ENCODE measurements at regions of chr7 and their contacts with region 1.

Region 1: DNA sequence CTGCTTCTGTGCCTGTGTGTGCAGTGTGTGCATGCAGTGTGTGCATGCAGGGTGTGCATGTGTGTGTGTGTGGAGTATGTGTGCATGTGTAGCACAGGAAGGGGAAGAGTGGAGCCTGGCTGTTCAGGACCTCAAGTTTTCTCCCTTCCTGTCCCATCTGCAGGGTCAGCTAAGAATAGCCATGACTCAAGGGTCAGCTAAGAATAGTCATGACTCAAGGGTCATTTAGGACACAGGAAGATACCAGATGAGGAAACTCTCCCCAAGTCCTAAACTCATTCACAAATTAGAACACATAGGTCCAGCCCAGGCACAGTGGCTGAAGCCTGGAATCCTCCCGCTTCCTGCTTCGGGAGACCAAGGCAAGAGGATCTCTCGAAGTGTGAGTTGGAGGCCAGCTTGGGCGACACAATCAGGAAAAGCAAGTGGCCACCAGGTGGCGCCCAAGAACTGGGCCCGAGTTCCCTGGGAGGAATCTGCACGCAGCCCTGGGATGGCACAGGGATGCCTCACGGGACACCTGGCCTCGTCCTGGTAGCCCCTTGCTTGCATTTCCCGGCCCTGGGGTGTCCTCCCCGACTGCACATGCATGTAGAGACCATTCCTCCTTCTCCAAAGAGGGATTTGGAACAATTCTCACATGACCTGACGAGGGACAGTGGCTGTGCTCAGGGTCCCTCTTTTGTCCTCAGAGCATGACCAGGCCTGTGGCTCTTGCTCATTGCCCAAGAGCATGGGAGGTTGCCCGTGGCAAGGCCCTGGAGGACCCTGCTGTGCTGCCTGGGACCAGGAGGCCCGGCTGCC is 21.4 kb upstream of the VOPP1 start:
- DNase-seq: peak; percentile 40 to 74 (median 53)
- H3K4me3 ChIP-seq: no peak overlapping the region
- H3K4me3 Mint-ChIP-seq: no peak overlapping the region
- H3K27ac ChIP-seq: no peak overlapping the region
- H3K27ac Mint-ChIP-seq: no peak overlapping the region
- H3K4me1 ChIP-seq: peaks cover 11% of the 10 kb centered on the region
- H3K4me1 Mint-ChIP-seq: peaks cover 2 to 5% (median 4%) of the 10 kb centered on the region in 3 donors
- H3K27me3 ChIP-seq: no peaks in the 10 kb centered on the region
- H3K27me3 Mint-ChIP-seq: peaks cover 3 to 11% of the 10 kb centered on the region in 2 donors

Region 2: GRCh38 chr7:55572378-55573233 is 21.1 kb before region 1 on chr7 and contains the start of gene VOPP1:
- CTCF ChIA-PET with region 1: interaction called, 10 read pairs
- POLR2A ChIA-PET with region 1: no interaction called
- DNase-seq: peak; percentile 43 to 73 (median 68)
- H3K4me3 ChIP-seq: peak within 1 kb of the TSS; percentile 76
- H3K4me3 Mint-ChIP-seq: peak within 1 kb of the TSS; percentile 85 to 99 (median 96)
- H3K27ac ChIP-seq: peak within 1 kb of the TSS; percentile 74
- H3K27ac Mint-ChIP-seq: peak within 1 kb of the TSS; percentile 89 to 98 (median 96)
- H3K4me1 ChIP-seq: peaks cover 53% of the 10 kb centered on the region
- H3K4me1 Mint-ChIP-seq: peaks cover 51 to 58% (median 58%) of the 10 kb centered on the region in 3 donors
- H3K27me3 ChIP-seq: no peaks in the 10 kb centered on the region
- H3K27me3 Mint-ChIP-seq: peaks cover 0 to 1% of the 10 kb centered on the region in 2 donors
- total RNA-seq, gene VOPP1: 65.6 to 67.3 TPM

Region 3: GRCh38 chr7:55964261-55965099 is 370.8 kb after region 1 on chr7 and contains the start of gene NIPSNAP2:
- CTCF ChIA-PET with region 1: no interaction called
- POLR2A ChIA-PET with region 1: no interaction called
- DNase-seq: peak; percentile 49 to 68 (median 63)
- H3K4me3 ChIP-seq: peak within 1 kb of the TSS; percentile 63
- H3K4me3 Mint-ChIP-seq: peak within 1 kb of the TSS; percentile 81 to 92 (median 85)
- H3K27ac ChIP-seq: peak within 1 kb of the TSS; percentile 81
- H3K27ac Mint-ChIP-seq: peak within 1 kb of the TSS; percentile 69 to 96 (median 92)
- H3K4me1 ChIP-seq: peaks cover 10% of the 10 kb centered on the region
- H3K4me1 Mint-ChIP-seq: peaks cover 28 to 52% (median 50%) of the 10 kb centered on the region in 3 donors
- H3K27me3 ChIP-seq: no peaks in the 10 kb centered on the region
- H3K27me3 Mint-ChIP-seq: no peaks in the 10 kb centered on the region
- total RNA-seq, gene NIPSNAP2: 42.2 to 46.5 TPM